Heart right ventricle (tissue), 16 donors: ENCODE measurements at regions of chr16 and their contacts with region 1.

Region 1: DNA sequence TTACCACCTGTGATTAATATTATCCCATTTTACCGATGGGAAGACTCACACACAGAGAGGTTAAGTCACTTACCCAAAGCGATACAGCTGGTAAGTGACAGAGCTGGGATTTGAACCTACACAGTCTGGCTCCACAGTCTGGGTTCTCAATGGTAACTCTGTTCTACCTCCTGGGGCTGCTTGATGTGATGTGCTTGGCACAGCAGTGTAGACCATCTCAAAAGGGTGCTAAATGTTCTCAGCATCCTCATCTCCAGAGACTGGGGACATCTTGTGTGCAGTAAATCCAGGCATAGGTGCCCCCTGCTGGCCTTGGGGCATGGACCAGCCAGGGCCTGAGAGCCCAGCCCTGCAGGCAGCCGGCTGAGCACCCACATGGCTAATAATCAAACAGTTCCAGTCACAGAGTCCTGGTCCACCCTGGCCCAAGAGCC is 15.4 kb upstream of the KATNB1 start:
- DNase-seq: peak; percentile 45 to 54
- ATAC-seq: peak in 7 of 8 donors; percentile 52 to 85 (median 79)
- H3K4me3 ChIP-seq: no peak overlapping the region
- H3K27ac ChIP-seq: no peak overlapping the region
- H3K4me1 ChIP-seq: no peaks in the 10 kb centered on the region
- H3K27me3 ChIP-seq: peaks cover 0 to 10% (median 0%) of the 10 kb centered on the region in 7 donors
- CTCF ChIP-seq: peak in 8 of 9 donors; percentile 32 to 71 (median 64)

Region 2: GRCh38 chr16:57576429-57576870 is 143.7 kb before region 1 on chr16:
- intact Hi-C with region 1: loop called in 6 of 10 experiments (anchors 5 to 10 kb)
- DNase-seq: peak; percentile 66 to 77
- ATAC-seq: peak in 7 of 8 donors; percentile 44 to 85 (median 79)
- H3K4me3 ChIP-seq: no peak overlapping the region
- H3K27ac ChIP-seq: no peak overlapping the region
- H3K4me1 ChIP-seq: peaks cover 0 to 10% (median 0%) of the 10 kb centered on the region in 9 donors
- H3K27me3 ChIP-seq: peaks cover 0 to 34% (median 10%) of the 10 kb centered on the region in 7 donors
- CTCF ChIP-seq: peak; percentile 87 to 98 (median 94)

Region 3: DNA sequence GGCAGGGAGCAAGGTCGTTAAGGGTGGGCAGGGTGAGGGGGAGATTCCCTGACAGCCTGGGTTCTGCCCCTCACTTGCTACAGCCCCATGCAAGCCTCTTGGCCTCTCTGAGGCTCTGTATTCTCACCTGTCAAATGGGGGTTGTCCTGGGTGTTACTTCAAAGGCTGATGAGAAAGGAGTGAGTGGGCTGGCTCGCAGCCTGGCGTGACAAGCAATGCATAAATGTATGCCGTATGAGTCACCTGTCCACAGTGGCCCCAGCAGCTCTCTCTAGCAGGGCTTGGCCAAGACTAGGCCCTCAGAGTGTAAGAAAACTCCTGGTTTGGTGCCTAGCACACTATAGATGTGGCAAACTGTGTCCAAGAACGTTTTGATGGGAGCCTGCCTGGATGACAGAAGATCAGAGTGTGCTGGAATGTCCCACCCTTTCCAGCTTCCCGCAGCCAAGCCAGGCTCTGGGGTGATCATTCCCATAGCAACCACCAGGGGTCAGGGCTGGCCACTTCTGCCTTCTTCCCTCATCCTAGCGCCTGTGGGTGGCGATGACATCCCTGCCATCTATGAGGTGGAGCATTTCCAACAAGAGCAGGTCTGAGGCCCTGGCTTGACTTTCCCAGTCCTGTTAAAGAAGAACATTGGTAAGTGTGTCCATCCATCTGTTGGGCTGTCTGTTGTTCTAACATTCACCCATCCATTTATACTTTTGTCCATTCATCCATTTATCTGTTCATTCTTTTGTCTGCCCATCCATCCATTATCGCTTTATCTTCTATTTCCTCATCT is 128.9 kb before region 1 on chr16:
- intact Hi-C with region 1: loop called in 6 of 10 experiments (anchors 1 to 10 kb)
- DNase-seq: peak; percentile 65 to 74
- ATAC-seq: peak; percentile 86 to 95 (median 92)
- H3K4me3 ChIP-seq: no peak overlapping the region
- H3K27ac ChIP-seq: peak overlapping the region in 1 of 10 donors; percentile 53
- H3K4me1 ChIP-seq: peaks cover 0 to 33% (median 4%) of the 10 kb centered on the region in 9 donors
- H3K27me3 ChIP-seq: peaks cover 0 to 4% (median 0%) of the 10 kb centered on the region in 7 donors
- CTCF ChIP-seq: peak; percentile 80 to 95 (median 91)

Region 4: DNA sequence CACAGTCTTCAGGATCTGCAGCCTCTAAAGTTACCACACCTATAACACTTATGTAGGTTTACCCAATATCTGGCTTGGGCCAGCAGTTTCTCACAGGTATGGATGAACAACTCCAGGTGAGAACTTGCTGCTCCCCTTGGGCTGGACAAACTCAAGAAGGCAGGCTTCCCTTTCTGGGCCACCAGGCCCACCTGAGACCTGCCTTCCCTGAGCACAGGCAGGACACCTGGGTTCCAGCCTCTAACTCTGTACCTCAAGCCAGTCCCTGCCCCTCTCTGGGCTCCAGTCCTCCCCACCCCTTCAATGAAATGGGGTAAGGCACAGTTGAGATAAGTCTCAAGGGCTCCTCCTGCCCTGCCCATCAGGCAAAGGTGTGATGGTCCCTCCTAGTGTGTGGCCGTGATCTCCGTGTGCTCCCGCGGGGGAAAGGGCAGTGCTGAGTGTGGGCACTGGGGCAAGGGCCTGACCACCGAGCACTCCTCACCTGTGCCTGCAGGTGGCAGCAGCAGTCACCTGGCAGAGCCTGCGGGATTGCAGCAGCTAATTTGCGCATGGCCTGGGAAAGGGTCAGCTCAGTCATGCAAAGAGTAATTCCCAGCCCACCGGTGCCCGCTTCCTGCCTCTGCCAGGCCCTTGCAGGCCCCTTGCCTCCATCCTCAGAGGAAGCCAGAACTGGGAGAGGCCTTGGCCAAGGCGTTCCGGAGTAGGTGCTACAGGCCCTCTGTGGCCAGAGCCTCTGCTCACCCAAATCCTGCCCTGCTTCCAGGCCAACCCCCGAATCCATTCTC is 119.9 kb before region 1 on chr16:
- intact Hi-C with region 1: loop called in 3 of 10 experiments (anchors 2 to 10 kb)
- DNase-seq: peak; percentile 45 to 52
- ATAC-seq: peak; percentile 58 to 94 (median 86)
- H3K4me3 ChIP-seq: no peak overlapping the region
- H3K27ac ChIP-seq: peak overlapping the region in 1 of 10 donors; percentile 75
- H3K4me1 ChIP-seq: peaks cover 0 to 36% (median 0%) of the 10 kb centered on the region in 9 donors
- H3K27me3 ChIP-seq: peaks cover 0 to 28% (median 0%) of the 10 kb centered on the region in 7 donors
- CTCF ChIP-seq: peak; percentile 52 to 80 (median 72)

Region 5: DNA sequence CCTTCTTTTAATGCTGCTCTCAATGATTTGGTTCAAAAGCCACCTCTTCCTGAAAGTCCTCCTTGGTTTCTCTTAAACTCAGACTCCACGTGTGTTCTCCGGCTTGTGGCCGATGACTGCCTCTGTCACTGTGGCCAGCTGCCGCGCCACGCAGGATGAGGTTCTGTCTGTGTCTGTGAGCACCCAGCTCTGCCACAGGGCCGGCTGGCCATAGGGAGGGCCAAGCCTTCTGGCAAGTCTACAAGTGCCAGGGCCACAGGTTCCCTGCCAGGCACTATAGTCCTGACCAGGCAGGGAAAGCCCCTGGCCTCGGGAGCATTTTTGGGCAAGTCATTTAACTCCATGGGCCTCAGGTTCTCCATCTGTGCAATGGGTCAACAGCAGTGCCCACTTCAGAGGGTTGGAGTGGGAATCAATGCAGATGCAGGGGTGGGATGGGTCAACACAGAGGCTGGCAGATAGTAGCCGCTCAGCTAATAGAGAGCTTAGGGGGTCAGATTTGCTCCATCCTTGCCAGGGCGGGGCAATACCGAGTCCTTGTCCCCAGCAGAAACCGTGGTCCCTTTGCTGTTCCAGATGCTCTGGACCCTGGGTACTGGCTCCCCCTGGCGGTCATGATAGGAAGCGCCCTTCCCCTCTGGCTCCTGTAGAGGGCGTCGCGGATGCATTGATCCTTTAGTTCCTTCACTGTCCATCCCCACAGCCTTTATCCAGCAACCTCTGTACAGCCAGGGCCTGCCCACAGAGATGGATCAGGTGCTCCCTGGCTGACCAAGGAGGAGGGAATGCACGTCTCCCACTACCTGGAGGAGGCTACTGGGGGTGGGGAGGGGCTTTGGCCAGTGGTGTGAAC is 71.3 kb before region 1 on chr16:
- intact Hi-C with region 1: loop called in 3 of 10 experiments (anchors 2 to 10 kb)
- DNase-seq: peak; percentile 73 to 79
- ATAC-seq: peak; percentile 32 to 50 (median 45)
- H3K4me3 ChIP-seq: peak overlapping the region in 1 of 10 donors; percentile 4
- H3K27ac ChIP-seq: peak overlapping the region; percentile 78 to 93 (median 86)
- H3K4me1 ChIP-seq: peaks cover 9 to 58% (median 39%) of the 10 kb centered on the region in 9 donors
- H3K27me3 ChIP-seq: peaks cover 0 to 14% (median 0%) of the 10 kb centered on the region in 7 donors
- CTCF ChIP-seq: peak; percentile 99 to 100 (median 100)

Region 6: GRCh38 chr16:57653936-57654335 is 66.2 kb before region 1 on chr16:
- intact Hi-C with region 1: loop called in 3 of 10 experiments (anchors 2 to 10 kb)
- DNase-seq: no peak
- ATAC-seq: peak in 6 of 8 donors; percentile 21 to 71 (median 51)
- H3K4me3 ChIP-seq: no peak overlapping the region
- H3K27ac ChIP-seq: peak overlapping the region in 1 of 10 donors; percentile 54
- H3K4me1 ChIP-seq: peaks cover 0 to 14% (median under 1%) of the 10 kb centered on the region in 9 donors
- H3K27me3 ChIP-seq: peaks cover 0 to 4% (median 0%) of the 10 kb centered on the region in 7 donors
- CTCF ChIP-seq: no peak

Region 7: GRCh38 chr16:57834936-57835335 is 114.8 kb after region 1 on chr16:
- intact Hi-C with region 1: no loop called
- DNase-seq: no peak
- ATAC-seq: no peak
- H3K4me3 ChIP-seq: no peak overlapping the region
- H3K27ac ChIP-seq: no peak overlapping the region
- H3K4me1 ChIP-seq: peaks cover 0 to 6% (median 3%) of the 10 kb centered on the region in 9 donors
- H3K27me3 ChIP-seq: no peaks in the 10 kb centered on the region
- CTCF ChIP-seq: no peak